ENCODE measurements at regions of chr6 and their contacts with region 1.

Region 1: DNA sequence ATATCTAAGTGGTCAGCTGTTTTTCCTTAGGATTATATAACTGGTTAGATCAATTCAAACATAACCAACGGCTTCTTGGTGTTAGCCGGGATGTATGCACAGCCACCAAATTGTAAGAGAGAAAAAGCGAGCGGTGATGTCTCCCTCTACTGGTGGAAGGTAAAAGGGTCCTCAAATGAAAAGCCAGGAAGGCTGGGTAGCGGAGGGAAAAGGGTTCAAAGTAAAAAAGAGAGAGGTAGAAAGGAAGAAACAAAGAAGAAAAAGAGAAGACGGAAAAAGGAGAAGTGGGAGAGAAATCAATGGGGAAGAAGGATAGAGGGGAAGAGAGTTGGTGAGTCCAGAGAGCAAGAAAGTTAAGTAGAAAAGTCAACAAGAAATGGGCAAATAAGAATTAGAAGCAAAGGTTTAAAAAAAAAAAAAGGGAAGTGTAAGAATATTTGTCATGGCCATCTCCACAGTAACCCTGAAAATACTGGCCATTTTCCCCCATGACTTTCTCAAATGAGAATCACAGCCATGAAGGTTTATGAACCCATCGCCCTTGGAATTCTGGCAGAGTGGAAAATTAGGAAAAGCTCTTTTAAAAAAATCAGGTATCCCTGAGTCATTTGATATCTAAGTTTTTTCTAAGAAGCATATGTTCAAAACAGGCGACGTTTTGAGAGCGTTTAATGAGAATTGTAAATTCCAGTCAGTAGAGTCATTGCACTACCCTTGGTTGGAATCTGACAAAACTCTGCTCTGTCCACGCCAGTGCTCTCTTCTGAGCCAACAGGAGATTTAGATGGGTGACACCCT is 155.6 kb upstream of the SNX9 start:
- DNase-seq: peak; percentile 88
- H3K4me3 ChIP-seq: no peak overlapping the region
- H3K27me3 ChIP-seq: no peaks in the 10 kb centered on the region
- CTCF ChIP-seq: peak; percentile 89

Region 2: DNA sequence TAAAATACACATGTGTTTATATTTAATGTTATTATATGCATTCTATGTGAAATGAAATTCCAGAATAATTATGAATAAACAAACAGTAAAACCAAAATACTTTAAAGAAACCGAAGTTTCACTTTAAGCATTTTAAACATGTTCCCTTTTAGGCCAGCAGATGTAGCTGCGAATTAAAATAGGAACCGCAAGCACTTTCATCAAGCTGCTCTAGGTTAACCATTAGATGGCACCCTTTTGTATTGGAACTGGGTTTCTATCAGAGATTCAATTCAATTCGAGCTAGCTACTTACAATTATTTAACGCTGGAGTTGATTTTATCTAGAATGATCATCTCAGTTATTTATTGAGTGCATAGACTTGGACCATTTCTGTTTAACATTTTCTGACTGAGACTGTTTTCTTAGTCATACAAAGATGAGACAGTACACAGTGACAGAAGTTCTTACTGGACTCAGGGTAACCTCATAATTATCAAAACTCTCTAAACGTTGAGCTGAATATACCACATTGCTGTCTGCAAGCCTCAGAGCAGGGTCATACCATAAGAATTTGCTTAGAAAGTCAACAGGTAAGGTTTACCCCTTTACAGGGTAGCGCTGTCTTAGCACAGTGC is 352.6 kb before region 1 on chr6:
- CTCF ChIA-PET with region 1: interaction called, 13 read pairs
- POLR2A ChIA-PET with region 1: no interaction called
- DNase-seq: peak; percentile 34
- H3K4me3 ChIP-seq: no peak overlapping the region
- H3K27me3 ChIP-seq: no peaks in the 10 kb centered on the region
- CTCF ChIP-seq: peak; percentile 86

Region 3: DNA sequence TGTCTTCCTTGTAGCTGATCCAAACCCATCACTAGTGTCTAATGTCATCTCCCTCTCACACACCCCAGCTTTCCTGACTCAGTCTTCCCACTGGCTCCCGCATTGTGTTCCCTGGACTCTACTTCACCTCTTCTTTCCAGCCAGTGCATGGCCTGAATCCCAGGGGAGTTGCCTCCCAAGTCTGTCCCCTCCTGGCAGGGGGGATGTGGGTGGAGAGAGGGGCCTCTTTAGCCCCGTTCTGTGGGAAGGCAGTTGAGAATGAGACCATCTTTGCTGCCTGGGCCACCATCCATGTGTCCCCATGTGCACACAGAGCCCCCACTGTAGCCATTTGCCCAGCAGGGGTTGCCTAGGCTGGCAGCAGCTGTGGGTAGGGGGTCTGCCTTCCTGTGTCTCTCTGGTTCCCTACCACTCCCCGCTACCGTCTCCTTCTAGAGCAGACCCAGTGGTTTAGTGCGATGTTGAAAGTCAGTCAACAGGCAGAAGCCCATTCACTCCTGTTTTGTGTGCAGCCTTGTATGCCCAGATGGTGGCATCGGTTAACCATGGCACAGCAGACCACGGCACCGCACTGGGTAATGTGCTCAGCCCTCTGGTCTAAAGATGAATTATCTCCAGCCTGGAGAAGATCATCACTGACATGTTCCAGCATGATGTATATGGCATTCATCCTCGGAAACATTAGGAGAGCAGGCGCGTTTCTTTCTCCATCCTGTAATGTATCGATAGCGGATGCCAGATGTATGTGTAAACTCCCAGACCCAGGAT is 23.2 kb before region 1 on chr6:
- CTCF ChIA-PET with region 1: interaction called, 17 read pairs
- POLR2A ChIA-PET with region 1: no interaction called
- DNase-seq: no peak
- H3K4me3 ChIP-seq: no peak overlapping the region
- H3K27me3 ChIP-seq: no peaks in the 10 kb centered on the region
- CTCF ChIP-seq: peak; percentile 68

Region 4: DNA sequence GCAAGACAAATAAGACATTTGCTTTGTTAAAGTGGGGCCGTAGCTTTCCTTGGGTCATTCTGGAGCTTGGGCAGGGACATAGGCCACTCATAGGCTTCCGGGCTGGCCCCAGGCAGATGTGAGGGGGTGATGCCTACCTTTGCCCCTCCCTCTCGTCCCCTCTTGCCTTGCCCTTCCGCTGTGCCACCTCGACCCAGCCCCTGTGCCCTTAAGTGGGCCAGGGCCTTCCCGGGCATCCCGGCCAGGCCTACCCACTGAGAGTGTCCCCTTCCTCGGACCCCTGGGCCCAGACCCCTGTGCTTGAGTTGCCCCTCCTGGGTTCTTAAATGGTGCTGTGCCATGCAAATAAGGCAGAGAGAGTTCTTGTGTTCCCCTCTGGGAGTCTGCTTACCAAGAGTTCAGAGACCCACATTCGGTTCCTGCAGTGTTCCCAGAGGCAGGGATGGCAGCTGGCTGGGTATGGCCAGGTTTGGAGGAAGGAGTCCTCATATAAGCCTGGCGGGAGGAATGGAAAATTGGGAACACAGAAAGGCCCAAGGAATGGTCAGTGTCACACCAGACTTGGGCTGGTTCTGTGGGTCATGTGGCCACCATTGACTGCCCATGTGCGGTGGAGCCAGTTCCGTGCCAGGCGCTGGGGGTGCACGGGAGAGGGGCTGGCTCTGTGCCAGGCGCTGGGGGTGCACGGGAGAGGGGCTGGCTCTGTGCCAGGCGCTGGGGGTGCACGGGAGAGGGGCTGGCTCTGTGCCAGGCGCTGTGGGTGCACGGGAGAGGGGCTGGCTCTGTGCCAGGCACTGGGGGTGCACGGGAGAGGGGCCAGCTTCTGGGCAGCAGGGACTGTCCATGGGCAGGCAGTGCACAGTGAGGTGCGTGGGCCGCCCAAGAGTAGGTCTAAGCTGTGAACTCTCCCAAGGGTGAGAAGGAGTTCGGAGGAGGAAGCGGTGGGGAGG is 17.8 kb before region 1 on chr6:
- CTCF ChIA-PET with region 1: interaction called, 50 read pairs
- POLR2A ChIA-PET with region 1: no interaction called
- DNase-seq: no peak
- H3K4me3 ChIP-seq: no peak overlapping the region
- H3K27me3 ChIP-seq: no peaks in the 10 kb centered on the region
- CTCF ChIP-seq: no peak

Region 5: DNA sequence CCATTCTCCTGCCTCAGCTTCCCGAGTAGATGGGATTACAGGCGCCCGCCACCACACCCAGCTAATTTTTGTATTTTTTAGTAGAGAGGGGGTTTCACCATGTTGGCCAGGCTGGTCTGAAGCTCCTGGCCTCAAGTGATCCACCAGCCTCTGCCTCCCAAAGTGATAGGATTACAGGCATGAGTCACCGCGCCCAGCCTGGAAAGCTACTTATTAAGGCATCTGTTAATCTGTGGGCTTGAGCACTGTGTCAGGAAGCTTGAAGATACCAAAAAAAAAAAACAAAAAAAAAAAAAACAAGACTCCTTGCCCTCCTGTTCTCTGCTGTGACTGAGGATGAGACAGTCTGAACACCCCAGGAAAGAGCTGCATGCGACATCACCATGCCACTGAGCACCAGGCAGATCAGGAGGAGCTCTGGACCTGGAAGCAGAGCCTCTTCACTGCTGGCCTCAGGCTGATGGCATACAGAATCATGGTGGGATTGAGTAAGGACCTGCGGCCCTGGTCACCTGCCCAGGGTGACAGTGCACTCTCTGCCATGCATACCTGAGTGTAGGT is 10.9 kb before region 1 on chr6:
- CTCF ChIA-PET with region 1: interaction called, 50 read pairs
- POLR2A ChIA-PET with region 1: no interaction called
- DNase-seq: no peak
- H3K4me3 ChIP-seq: no peak overlapping the region
- H3K27me3 ChIP-seq: no peaks in the 10 kb centered on the region
- CTCF ChIP-seq: no peak

Region 6: GRCh38 chr6:157682931-157683403 is 15.6 kb after region 1 on chr6:
- CTCF ChIA-PET with region 1: interaction called, 13 read pairs
- POLR2A ChIA-PET with region 1: no interaction called
- DNase-seq: no peak
- H3K4me3 ChIP-seq: no peak overlapping the region
- H3K27me3 ChIP-seq: peaks cover 1% of the 10 kb centered on the region; the same call in 1 of the 2 replicates
- CTCF ChIP-seq: no peak

Region 7: DNA sequence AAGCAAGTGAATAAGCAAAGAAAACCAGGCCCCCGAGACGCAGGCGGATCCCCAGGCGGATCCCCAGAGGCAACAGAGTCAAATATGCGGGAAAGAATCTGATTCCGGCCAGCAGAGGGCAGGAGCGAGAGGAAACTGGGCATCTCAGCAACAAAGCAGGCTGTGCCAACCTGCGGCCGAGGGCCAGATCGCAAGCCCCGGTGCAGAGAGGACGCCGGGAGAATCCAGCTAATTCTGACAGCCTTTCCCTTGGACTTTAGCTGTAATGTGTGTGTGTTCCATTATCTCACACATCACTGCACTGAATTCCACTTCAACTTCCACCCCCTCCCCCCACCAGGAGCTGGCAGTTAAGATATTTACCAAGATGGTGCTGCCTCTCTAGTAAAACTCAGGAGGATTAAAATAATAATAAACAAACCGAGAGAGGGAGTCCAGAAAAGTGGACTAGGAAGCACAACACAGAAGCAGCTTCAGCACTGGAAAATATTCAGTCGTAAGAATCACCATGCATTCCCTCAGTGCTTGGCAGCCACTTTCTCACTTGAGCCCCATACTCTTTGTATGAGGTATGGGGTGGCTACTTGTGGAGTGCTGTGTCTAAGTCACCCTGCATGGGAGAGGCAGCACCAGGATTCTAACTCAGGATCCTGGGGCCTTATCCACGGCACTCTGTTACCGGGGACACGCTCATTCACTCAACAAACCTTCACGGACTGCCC is 89.5 kb after region 1 on chr6:
- CTCF ChIA-PET with region 1: interaction called, 12 read pairs
- POLR2A ChIA-PET with region 1: no interaction called
- DNase-seq: peak; percentile 17
- H3K4me3 ChIP-seq: no peak overlapping the region
- H3K27me3 ChIP-seq: no peaks in the 10 kb centered on the region
- CTCF ChIP-seq: peak; percentile 80

Region 8: GRCh38 chr6:158002951-158003853 is 335.8 kb after region 1 on chr6:
- CTCF ChIA-PET with region 1: no interaction called
- POLR2A ChIA-PET with region 1: no interaction called
- DNase-seq: peak; percentile 95
- H3K4me3 ChIP-seq: no peak overlapping the region
- H3K27me3 ChIP-seq: no peaks in the 10 kb centered on the region
- CTCF ChIP-seq: no peak

Measured in BJ (cell line).